A673 (cell line): ENCODE measurements at regions of chr2 and their contacts with region 1.

Region 1: DNA sequence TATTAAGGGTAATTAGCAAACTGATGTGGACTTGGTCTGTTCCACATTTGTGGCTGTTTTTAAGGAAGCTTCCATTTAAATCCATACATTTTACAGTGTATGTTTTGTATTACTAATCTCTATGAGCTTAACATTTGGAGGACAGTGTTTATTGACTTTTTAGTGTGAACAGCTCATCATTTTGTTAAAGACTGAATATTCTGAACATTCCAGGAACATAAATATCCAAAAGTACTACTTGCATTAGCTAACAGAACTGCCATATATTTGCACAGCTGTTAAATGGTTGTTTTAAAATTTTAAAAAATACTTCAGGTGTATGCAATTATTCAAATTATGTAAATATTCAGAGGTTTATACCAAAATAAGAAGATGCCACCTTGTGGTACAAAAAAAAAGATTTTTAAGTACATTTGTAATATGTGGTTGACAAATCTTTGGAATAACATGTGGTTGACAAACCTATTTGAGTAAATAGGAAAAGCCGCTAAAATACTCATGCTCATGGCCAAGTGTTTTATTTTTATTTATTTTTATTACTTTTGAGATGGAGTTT is 439.7 kb upstream of the FANCL start:
- DNase-seq: peak; percentile 4
- H3K4me3 ChIP-seq: no peak overlapping the region
- H3K27ac ChIP-seq: no peak overlapping the region
- H3K4me1 ChIP-seq: no peaks in the 10 kb centered on the region
- H3K27me3 ChIP-seq: no peaks in the 10 kb centered on the region
- CTCF ChIP-seq: peak; percentile 35; the same call in 1 of the 2 replicates

Region 2: GRCh38 chr2:57981083-57981768 is 699.6 kb before region 1 on chr2:
- CTCF ChIA-PET with region 1: no interaction called
- POLR2A ChIA-PET with region 1: interaction called, 12 read pairs
- intact Hi-C with region 1: no loop called
- DNase-seq: no peak
- H3K4me3 ChIP-seq: no peak overlapping the region
- H3K27ac ChIP-seq: no peak overlapping the region
- H3K4me1 ChIP-seq: no peaks in the 10 kb centered on the region
- H3K27me3 ChIP-seq: no peaks in the 10 kb centered on the region
- CTCF ChIP-seq: no peak

Region 3: DNA sequence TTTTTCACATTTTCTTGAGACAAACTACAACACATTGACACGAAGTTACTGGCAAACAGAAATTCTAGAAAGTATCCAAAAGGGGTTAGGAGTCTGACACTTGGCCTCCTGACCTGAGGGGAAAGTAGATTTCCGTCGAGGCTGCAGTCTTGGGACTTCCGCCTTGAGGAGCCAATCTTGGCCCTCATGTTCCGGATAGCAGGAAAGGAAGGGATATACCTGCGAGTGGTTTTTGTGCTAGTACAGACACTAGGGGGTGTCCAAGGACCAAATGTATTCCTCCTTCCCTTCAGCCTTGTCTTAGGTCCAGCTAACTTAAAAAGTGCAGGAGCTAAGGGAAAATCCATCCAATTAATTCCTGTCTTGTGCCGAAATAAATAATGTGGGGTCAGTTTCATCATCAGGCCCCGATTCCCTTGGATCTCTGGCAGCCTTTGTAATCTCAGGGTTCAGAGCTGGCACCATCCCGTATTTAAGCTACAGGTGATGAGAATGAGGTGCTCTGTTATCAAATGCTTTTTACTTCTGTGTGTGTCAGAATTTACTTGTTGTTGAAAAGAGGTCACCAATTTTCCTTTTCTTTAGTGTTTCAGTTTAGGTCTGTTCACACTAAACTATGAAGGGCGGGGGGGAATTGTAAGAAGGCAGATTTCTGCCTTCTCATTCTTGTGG is 109.5 kb before region 1 on chr2:
- CTCF ChIA-PET with region 1: interaction called, 7 read pairs
- POLR2A ChIA-PET with region 1: no interaction called
- intact Hi-C with region 1: loop called (anchors 2 kb)
- DNase-seq: peak; percentile 78
- H3K4me3 ChIP-seq: no peak overlapping the region
- H3K27ac ChIP-seq: no peak overlapping the region
- H3K4me1 ChIP-seq: peaks cover 7% of the 10 kb centered on the region
- H3K27me3 ChIP-seq: no peaks in the 10 kb centered on the region
- CTCF ChIP-seq: peak; percentile 76

Region 4: DNA sequence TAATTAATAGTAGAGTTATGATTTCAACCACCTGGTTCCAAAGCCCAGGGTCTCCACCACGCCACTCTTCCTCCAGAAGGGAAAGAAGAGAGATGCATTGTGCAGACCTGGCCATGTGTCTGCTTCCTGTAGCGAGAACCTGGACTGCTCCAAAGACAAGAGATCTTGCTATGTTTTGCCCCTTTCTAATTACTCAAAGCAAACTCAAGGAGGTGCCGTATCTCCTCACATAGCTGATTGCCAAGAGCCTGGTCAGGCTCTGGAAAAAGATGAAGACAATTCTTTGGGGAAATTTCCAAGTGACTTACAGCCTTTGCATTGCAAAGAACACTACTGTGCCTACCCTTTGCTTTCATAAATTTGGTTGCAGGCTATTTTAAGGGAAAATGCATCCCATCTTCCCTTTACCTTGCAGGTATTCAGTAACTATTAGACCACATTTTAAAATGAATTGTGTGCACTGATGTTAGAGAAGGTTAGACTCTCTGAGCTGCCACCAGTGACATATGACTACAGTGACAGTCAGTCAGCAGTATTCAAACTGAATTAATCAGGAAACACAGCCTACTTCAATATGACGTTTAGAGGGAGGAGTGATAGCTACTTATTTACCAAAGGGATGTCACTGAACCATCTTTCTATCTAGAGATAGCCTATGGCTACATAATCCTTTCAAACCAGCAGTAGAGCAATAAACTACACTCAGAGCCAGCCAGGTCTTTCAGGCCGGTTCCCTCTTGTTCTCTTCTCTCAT is 402.4 kb after region 1 on chr2:
- CTCF ChIA-PET with region 1: no interaction called
- POLR2A ChIA-PET with region 1: no interaction called
- intact Hi-C with region 1: no loop called
- DNase-seq: no peak
- H3K4me3 ChIP-seq: no peak overlapping the region
- H3K27ac ChIP-seq: no peak overlapping the region
- H3K4me1 ChIP-seq: no peaks in the 10 kb centered on the region
- H3K27me3 ChIP-seq: peaks cover 6% of the 10 kb centered on the region
- CTCF ChIP-seq: no peak